WTC11 (cell line): ENCODE measurements at regions of chr5 and their contacts with region 1.

Region 1: DNA sequence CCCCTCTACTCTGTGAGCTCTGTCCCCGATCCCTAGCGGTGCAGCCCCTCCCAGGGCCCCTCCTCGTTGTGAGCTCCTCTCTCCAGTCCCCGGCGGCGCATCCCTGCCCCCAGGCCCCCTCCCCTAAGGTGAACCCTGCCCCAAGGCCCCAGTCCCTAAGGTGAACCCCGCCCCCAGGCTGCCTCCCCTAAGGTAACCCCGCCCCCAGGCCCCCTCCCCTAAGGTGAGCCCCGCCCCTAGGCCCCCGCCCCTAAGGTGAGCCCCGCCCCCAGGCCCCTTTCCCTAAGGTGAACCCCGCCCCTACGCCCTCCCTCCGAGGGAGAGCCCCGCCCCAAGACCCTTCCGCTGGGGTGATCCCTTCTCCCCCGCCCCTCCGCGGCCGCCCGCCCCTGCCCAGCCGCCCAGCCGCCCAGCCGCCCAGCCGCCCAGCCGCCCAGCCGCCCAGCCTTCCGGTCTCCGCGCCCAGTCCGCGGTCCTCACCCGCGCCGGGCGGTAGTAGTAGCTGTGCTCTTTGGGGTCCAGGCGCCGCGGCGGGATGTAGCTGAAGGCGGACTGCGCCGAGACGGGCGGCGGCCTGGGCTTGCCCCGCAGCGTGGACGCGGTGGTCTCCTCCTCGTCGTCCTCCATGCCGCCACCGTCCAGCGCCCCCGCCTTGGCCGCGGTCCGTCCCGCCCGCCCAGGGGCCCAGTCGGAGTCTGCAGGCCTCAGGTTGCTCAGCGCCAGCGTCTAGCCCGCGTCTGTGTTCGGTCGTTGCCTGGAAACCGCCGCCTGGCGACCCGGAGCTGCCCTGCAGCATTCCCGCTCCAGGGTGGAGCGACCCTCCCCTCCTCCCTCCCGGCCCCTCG is at the start of gene CFAP90:
- DNase-seq: peak; percentile 91
- ATAC-seq: peak; percentile 76
- H3K4me3 Mint-ChIP-seq: peak within 1 kb of the TSS; percentile 82
- H3K27ac Mint-ChIP-seq: 0 out of 2 replicates have a peak within 1 kb of the TSS, but pooled peaks have one; percentile 53
- H3K4me1 Mint-ChIP-seq: peaks cover 7% of the 10 kb centered on the region
- H3K27me3 Mint-ChIP-seq: peaks cover 65% of the 10 kb centered on the region
- CTCF ChIP-seq: no peak
- total RNA-seq, gene CFAP90: 0.21 to 0.64 TPM (median 0.33 TPM) in 3 replicates

Region 2: DNA sequence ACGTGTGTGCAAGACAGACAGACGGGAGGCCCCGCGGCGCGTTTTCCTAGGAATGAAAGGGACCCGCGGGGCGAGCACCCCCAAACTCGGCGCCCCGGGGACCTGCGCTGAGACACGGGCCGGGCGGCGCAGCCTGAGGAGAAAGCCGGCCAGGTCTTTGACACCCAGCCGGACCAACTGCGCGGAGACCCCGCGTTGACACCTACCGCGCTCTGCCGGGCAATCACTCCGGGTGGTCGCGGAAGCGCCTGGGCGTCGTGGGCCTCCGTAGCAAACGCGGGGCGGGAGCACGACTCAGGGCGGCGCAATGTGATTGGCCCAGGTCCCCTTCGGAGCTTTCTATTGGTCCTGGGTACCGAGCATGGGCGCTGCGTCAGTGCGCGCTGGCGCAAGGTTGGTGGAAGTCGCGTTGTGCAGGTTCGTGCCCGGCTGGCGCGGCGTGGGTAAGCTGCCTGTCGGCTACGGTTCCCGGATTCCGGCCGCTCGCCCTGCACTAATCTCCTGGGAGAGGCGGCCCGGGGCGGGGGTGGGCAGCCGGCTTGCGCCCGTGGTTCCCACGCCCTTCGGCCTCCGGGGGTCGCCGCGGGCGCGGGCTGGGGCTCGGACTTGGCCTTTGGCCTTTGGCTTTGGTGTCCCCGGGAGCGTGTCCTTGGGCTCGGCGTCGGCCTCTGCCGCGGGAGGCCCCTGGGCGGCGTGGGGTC is 18.3 kb after region 1 on chr5 and contains the starts of genes FASTKD3 and MTRR:
- CTCF ChIA-PET with region 1: interaction called, 12 read pairs
- POLR2A ChIA-PET with region 1: interaction called, 4 read pairs
- DNase-seq: peak; percentile 83
- ATAC-seq: peak; percentile 100
- H3K4me3 Mint-ChIP-seq: peak within 1 kb of the TSS; percentile 84
- H3K27ac Mint-ChIP-seq: no peak within 1 kb of the TSS; the same call in 1 of the 2 replicates
- H3K4me1 Mint-ChIP-seq: peaks cover 16% of the 10 kb centered on the region
- H3K27me3 Mint-ChIP-seq: no peaks in the 10 kb centered on the region
- CTCF ChIP-seq: no peak
- total RNA-seq, gene FASTKD3: 7.8 to 9.6 TPM (median 8.7 TPM) in 3 replicates
- total RNA-seq, gene MTRR: 39.1 to 46.9 TPM (median 42.3 TPM) in 3 replicates